ENCODE measurements at regions of chr18 and their contacts with region 1.

Region 1: DNA sequence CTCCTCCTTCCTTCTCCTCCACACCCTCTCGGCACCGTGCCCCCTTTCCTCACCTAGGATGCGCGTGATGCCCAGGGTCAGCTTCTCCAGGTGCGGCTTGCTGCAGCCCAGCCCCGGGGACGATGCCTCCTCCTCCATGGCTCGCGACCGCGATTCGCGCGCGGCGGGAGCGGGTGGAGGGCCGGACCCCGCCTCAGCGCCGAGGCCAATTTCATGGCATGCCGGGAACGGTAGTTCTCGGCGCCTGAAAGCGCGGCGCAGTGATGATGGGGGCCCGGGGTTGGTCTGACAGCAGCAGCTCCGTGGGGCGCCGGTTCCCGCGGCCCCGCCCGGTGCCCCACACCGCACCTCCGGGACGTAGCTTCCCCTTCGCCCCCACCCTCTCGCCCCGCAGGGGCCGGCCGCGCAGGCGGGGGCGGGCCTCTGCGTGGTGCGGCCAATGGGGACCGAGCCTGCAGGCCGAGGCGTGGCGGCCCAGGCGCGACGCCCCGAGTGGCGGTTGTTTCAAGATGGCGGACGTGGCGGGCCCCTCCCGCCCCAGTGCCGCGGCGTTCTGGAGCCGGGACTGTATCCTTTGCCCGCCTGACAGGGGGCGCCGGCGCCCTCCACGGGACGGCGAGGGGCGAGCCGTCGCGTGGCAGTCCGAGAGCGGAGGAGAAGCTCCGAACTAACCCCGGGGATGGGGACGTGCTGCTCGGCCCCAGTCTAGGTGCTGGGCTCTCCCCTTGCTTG is at the starts of genes KIAA1328 and TPGS2:
- DNase-seq: peak; percentile 82 to 92 (median 88)
- H3K4me3 ChIP-seq: peak within 1 kb of the TSS; percentile 95
- H3K4me3 Mint-ChIP-seq: peak within 1 kb of the TSS; percentile 90 to 99 (median 96)
- H3K27ac ChIP-seq: peak within 1 kb of the TSS; percentile 77
- H3K27ac Mint-ChIP-seq: peak within 1 kb of the TSS; percentile 80 to 96 (median 91)
- H3K4me1 ChIP-seq: peaks cover 17% of the 10 kb centered on the region
- H3K4me1 Mint-ChIP-seq: peaks cover 32 to 63% (median 44%) of the 10 kb centered on the region in 3 donors
- H3K27me3 ChIP-seq: no peaks in the 10 kb centered on the region
- H3K27me3 Mint-ChIP-seq: no peaks in the 10 kb centered on the region
- total RNA-seq, gene KIAA1328: 6.6 to 6.8 TPM
- total RNA-seq, gene TPGS2: 70.2 to 75.5 TPM

Region 2: DNA sequence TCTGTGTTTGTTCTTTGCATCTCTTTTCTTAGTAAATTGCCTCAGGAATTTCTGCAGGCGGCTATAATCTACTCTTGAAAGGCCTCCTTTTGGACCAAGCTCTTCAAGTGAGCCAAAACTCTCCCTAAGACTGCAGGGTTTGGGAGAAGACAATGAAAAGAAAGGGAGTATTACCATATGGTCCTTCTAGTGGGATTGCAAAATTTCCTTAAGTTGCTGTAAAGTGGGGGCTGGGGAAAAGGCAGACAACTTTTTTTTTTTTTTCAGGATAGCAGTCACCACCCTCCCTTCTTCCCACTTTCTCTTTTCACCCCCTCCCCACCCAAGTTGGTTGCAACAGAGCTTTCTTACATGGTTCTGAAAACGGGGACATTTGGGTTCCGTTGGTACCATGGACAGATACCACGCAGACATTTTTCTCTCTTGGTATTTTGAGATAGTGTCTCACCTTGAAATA is 347.6 kb before region 1 on chr18:
- CTCF ChIA-PET with region 1: no interaction called
- POLR2A ChIA-PET with region 1: no interaction called
- DNase-seq: no peak
- H3K4me3 ChIP-seq: no peak overlapping the region
- H3K4me3 Mint-ChIP-seq: no peak overlapping the region
- H3K27ac ChIP-seq: no peak overlapping the region
- H3K27ac Mint-ChIP-seq: no peak overlapping the region
- H3K4me1 ChIP-seq: no peaks in the 10 kb centered on the region
- H3K4me1 Mint-ChIP-seq: no peaks in the 10 kb centered on the region
- H3K27me3 ChIP-seq: no peaks in the 10 kb centered on the region
- H3K27me3 Mint-ChIP-seq: peaks cover 0 to 5% of the 10 kb centered on the region in 2 donors

Region 3: DNA sequence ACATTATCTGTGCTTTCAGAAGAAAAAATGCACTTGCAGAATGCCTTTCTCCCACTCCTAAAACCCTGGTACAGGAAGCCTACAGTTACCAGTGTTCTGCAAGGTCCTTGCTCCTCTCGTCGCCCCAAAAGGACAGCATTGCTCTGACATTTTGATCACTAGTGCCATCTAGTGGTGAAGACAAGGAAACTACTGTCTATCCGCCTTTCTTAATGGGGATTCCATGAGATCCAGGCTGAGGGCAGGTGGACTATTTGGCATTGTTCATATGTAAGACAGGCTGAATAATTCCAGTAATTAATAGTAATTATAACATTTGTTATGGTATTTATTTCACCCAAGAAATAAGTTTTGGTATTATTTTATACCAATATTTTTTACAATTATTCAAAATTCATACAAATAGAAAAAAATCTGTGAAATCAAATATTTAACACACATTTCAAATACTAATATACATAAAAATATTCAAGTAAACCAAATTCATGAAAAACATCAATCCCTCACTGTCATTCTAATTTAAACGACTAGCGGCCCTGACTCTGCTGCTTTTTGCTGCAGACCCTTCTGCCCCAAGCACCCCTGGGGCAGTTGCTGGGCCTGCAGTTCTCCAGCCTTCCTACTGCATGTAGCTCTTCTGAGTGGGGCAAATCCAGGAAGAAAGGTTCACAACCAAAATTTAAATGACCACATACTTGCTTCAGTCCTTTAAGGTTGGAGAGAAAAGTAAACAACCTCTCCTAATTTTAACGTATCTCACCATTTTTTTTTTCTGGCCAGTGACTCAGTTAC is 19.0 kb before region 1 on chr18:
- CTCF ChIA-PET with region 1: interaction called, 17 read pairs
- POLR2A ChIA-PET with region 1: interaction called, 3 read pairs
- DNase-seq: peak in 4 of 5 donors; percentile 11 to 60 (median 51)
- H3K4me3 ChIP-seq: no peak overlapping the region
- H3K4me3 Mint-ChIP-seq: no peak overlapping the region
- H3K27ac ChIP-seq: no peak overlapping the region
- H3K27ac Mint-ChIP-seq: peak overlapping the region in 3 of 8 donors; percentile 29 to 51 (median 47)
- H3K4me1 ChIP-seq: peaks cover 5% of the 10 kb centered on the region
- H3K4me1 Mint-ChIP-seq: peaks cover 18 to 26% (median 22%) of the 10 kb centered on the region in 3 donors
- H3K27me3 ChIP-seq: no peaks in the 10 kb centered on the region
- H3K27me3 Mint-ChIP-seq: no peaks in the 10 kb centered on the region

Region 4: GRCh38 chr18:36817039-36817438 is 11.8 kb before region 1 on chr18:
- CTCF ChIA-PET with region 1: interaction called, 17 read pairs
- POLR2A ChIA-PET with region 1: interaction called, 3 read pairs
- DNase-seq: no peak
- H3K4me3 ChIP-seq: no peak overlapping the region
- H3K4me3 Mint-ChIP-seq: no peak overlapping the region
- H3K27ac ChIP-seq: no peak overlapping the region
- H3K27ac Mint-ChIP-seq: peak overlapping the region in 1 of 8 donors; percentile 74
- H3K4me1 ChIP-seq: no peaks in the 10 kb centered on the region
- H3K4me1 Mint-ChIP-seq: peaks cover 18 to 44% (median 19%) of the 10 kb centered on the region in 3 donors
- H3K27me3 ChIP-seq: no peaks in the 10 kb centered on the region
- H3K27me3 Mint-ChIP-seq: no peaks in the 10 kb centered on the region

Measured in CD8-positive, alpha-beta memory T cell (primary cell).